Ovary (tissue), 10 donors: ENCODE measurements at regions of chr1 and their contacts with region 1.

Region 1: DNA sequence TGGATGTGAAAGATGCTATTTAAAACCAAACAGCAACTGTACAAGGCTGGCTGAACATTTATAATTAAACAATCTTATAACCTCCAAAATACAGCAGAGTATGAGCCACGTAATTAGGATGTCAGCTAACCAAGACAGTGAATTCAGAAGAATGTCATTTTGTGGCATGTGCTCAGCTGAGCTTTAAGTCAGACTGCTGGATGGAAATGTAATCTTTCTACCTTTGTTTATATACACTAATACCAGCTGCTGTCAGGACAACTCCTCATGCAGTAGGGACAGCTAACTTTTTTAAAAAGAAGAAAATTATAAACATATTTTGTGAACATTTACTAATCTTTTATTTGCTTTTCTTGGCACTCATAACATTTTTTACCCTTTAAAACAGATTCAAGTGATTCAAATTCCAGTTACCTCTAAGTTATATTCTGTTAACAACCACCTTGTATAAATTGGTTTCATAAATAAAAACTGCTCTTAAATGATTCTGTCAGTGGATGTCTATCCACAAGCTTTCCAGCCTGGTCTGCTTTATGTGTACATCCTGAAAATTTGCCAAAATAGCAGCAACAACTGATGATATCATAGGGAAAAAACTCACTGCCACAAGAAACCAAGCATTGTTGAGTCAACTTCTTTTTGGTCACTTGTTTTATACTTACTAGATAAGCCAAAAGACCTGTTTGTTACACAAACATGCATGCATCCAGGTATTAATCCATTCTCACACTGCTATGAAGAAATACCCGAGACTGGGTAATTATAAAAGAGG is 36.1 kb downstream of the DPH5 start:
- DNase-seq: no peak
- H3K4me3 ChIP-seq: no peak overlapping the region
- H3K27ac ChIP-seq: no peak overlapping the region
- H3K4me1 ChIP-seq: no peaks in the 10 kb centered on the region
- H3K27me3 ChIP-seq: no peaks in the 10 kb centered on the region
- CTCF ChIP-seq: no peak
- EP300 ChIP-seq: no peak
- POLR2A ChIP-seq: no peak

Region 2: GRCh38 chr1:100912019-100912418 is 77.5 kb before region 1 on chr1:
- intact Hi-C with region 1: loop called in 1 of 4 experiments (anchors 10 kb)
- DNase-seq: no peak
- H3K4me3 ChIP-seq: no peak overlapping the region
- H3K27ac ChIP-seq: no peak overlapping the region
- H3K4me1 ChIP-seq: no peaks in the 10 kb centered on the region
- H3K27me3 ChIP-seq: no peaks in the 10 kb centered on the region
- CTCF ChIP-seq: no peak
- EP300 ChIP-seq: no peak
- POLR2A ChIP-seq: no peak

Region 3: GRCh38 chr1:100941098-100941527 is 48.4 kb before region 1 on chr1:
- intact Hi-C with region 1: no loop called
- DNase-seq: no peak
- H3K4me3 ChIP-seq: no peak overlapping the region
- H3K27ac ChIP-seq: no peak overlapping the region
- H3K4me1 ChIP-seq: no peaks in the 10 kb centered on the region
- H3K27me3 ChIP-seq: no peaks in the 10 kb centered on the region
- CTCF ChIP-seq: no peak
- EP300 ChIP-seq: no peak
- POLR2A ChIP-seq: no peak